ENCODE measurements at regions of chr2 and their contacts with region 1.

Region 1: GRCh38 chr2:207529330-207530159 is at the start of gene CREB1:
- DNase-seq: peak; percentile 100
- H3K4me3 Mint-ChIP-seq: peak within 1 kb of the TSS; percentile 98
- H3K27ac Mint-ChIP-seq: peak within 1 kb of the TSS; percentile 100
- H3K4me1 Mint-ChIP-seq: peaks cover 59% of the 10 kb centered on the region
- H3K27me3 Mint-ChIP-seq: no peaks in the 10 kb centered on the region
- total RNA-seq, gene CREB1: 93.7 to 97.7 TPM

Region 2: GRCh38 chr2:206159346-206160124 is 1370.0 kb before region 1 on chr2 and contains the starts of genes EEF1B2 and NDUFS1:
- CTCF ChIA-PET with region 1: no interaction called
- intact Hi-C with region 1: loop called (anchors 1 kb)
- DNase-seq: peak; percentile 98
- H3K4me3 Mint-ChIP-seq: peak within 1 kb of the TSS; percentile 96
- H3K27ac Mint-ChIP-seq: peak within 1 kb of the TSS; percentile 97
- H3K4me1 Mint-ChIP-seq: peaks cover 50% of the 10 kb centered on the region
- H3K27me3 Mint-ChIP-seq: no peaks in the 10 kb centered on the region
- total RNA-seq, gene EEF1B2: 1,328 to 1,373 TPM
- total RNA-seq, gene NDUFS1: 81.1 to 83.3 TPM

Region 3: DNA sequence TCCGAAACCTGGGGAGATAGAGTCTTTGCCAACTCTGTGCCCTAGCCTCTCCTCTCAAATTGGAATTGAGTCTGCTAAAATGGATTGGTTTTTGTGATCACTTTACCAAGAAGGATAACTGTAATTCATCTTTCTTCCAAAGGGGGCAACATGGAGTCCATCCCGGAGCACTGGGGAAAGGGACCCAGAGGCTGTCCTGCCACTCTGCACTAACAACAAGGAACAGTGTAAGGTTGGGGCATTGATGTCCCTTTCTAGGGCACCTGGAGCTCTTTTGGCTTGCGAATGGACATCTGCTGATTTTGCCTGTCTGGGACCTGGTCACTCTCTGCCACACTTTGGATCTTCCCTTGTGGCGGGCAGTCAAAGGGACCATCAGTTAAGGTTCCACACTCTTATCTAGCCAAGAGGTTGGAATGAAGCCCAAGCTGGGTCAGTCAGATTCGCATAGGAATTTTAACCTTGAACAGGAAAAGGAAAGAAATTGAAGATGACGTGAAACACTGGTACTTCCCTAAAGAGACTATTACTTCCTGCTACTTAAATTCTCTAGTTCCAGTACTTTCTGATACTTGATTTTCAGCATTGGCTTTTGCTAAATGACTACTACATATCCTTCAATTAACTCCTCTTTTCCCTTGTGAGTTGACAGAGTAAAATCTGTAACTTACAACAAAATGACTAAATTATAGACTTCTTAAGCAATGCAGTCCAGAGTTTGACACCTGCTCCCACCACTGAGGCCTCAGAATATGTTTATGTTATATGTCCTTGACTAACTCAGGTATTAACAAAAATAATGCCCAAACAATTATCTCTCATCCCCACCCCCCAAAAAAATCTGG is 299.1 kb before region 1 on chr2:
- CTCF ChIA-PET with region 1: no interaction called
- intact Hi-C with region 1: loop called (anchors 5 kb)
- DNase-seq: no peak
- H3K4me3 Mint-ChIP-seq: no peak overlapping the region
- H3K27ac Mint-ChIP-seq: peak overlapping the region; percentile 86
- H3K4me1 Mint-ChIP-seq: peaks cover 53% of the 10 kb centered on the region
- H3K27me3 Mint-ChIP-seq: no peaks in the 10 kb centered on the region

Region 4: DNA sequence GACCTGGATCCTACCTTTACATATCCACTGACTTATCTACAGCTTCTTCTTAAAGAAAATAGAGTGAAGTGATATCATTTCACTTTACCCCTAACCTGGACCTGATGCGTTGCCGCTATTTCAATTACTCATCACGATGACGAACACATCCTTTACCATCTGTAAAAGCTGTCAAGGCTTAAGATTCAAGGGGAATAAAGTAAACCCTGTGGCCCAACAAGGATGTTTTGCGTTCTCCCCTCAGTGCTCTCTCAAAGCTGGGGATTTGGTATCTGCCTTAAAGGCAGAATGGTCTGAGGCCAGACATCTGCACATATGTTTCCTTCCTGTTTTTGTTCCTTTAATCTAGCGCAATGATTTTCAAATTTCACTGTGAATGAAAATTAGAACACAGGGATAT is 263.7 kb before region 1 on chr2:
- CTCF ChIA-PET with region 1: no interaction called
- intact Hi-C with region 1: no loop called
- DNase-seq: peak; percentile 27
- H3K4me3 Mint-ChIP-seq: no peak overlapping the region
- H3K27ac Mint-ChIP-seq: no peak overlapping the region
- H3K4me1 Mint-ChIP-seq: peaks cover 9% of the 10 kb centered on the region
- H3K27me3 Mint-ChIP-seq: no peaks in the 10 kb centered on the region

Region 5: GRCh38 chr2:207394812-207395534 is 134.6 kb before region 1 on chr2:
- CTCF ChIA-PET with region 1: no interaction called
- intact Hi-C with region 1: no loop called
- DNase-seq: peak; percentile 71
- H3K4me3 Mint-ChIP-seq: no peak overlapping the region
- H3K27ac Mint-ChIP-seq: peak overlapping the region; percentile 7
- H3K4me1 Mint-ChIP-seq: peaks cover 8% of the 10 kb centered on the region
- H3K27me3 Mint-ChIP-seq: no peaks in the 10 kb centered on the region

Region 6: GRCh38 chr2:207484444-207485391 is 44.8 kb before region 1 on chr2:
- CTCF ChIA-PET with region 1: interaction called, 6 read pairs
- intact Hi-C with region 1: loop called (anchors 2 kb)
- DNase-seq: no peak
- H3K4me3 Mint-ChIP-seq: no peak overlapping the region
- H3K27ac Mint-ChIP-seq: no peak overlapping the region
- H3K4me1 Mint-ChIP-seq: peaks cover 27% of the 10 kb centered on the region
- H3K27me3 Mint-ChIP-seq: no peaks in the 10 kb centered on the region

Region 7: GRCh38 chr2:207710814-207711740 is 181.5 kb after region 1 on chr2 and contains the start of gene CCNYL1:
- CTCF ChIA-PET with region 1: no interaction called
- intact Hi-C with region 1: loop called (anchors 1 kb)
- DNase-seq: peak; percentile 98
- H3K4me3 Mint-ChIP-seq: peak within 1 kb of the TSS; percentile 88
- H3K27ac Mint-ChIP-seq: peak within 1 kb of the TSS; percentile 56
- H3K4me1 Mint-ChIP-seq: peaks cover 26% of the 10 kb centered on the region
- H3K27me3 Mint-ChIP-seq: no peaks in the 10 kb centered on the region
- total RNA-seq, gene CCNYL1: 2.5 to 2.7 TPM

Region 8: DNA sequence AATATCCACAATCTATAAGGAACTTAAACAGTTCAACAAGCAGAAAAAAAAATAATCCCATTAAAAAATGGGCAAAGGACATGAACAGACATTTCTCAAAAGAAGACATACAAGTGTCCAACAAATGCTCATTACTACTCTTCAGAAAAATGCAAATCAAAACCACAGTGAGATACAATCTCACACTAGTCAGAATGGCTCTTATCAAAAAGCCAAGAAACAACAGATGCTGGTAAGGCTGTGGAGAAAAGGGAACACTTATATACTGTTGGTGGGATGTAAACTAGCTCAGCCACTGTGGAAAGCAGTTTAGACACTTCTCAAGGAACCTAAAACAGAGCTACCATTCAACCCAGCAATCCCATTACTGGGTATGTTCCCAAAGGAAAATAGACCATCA is 623.6 kb after region 1 on chr2:
- CTCF ChIA-PET with region 1: no interaction called
- intact Hi-C with region 1: no loop called
- DNase-seq: no peak
- H3K4me3 Mint-ChIP-seq: no peak overlapping the region
- H3K27ac Mint-ChIP-seq: no peak overlapping the region
- H3K4me1 Mint-ChIP-seq: no peaks in the 10 kb centered on the region
- H3K27me3 Mint-ChIP-seq: no peaks in the 10 kb centered on the region

Region 9: DNA sequence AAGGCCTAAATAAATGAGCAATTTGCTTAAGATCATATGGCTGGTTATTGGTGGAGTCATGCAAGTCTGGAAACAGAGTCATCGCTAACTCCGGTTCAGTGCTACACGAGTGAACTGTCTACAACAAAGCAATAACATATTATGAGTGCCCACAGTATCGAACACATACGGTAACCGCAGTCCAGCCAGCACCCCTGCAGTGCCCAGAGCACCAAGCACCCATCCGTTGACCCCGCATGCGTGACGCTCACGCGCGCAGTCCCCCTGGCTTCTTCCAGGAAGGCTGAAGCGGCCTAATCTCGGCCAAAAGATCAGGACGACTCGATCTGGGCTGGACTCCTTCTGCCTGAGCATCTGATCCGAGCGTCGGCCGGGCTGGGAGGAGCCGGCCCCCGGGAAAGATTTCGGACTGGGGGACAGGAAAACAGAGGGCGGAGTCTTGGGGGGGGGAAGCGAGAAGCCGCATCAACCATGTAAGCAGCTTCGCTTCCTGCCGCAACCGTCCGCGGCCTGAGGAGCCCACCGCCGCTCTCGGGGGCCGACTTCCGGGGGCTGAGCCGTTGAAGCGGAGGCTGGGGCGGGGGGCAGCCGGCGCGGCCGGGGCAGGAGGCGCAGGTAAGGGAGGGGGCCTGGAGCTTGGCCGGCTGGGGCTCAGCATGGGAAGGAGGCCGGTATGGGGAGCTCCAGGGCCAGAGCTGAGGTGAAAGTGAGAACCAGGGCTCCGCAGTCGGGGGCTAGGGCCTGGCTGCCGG is 736.4 kb after region 1 on chr2 and contains the start of gene PIKFYVE:
- CTCF ChIA-PET with region 1: no interaction called
- intact Hi-C with region 1: loop called (anchors 1 kb)
- DNase-seq: peak; percentile 94
- H3K4me3 Mint-ChIP-seq: peak within 1 kb of the TSS; percentile 95
- H3K27ac Mint-ChIP-seq: peak within 1 kb of the TSS; percentile 94
- H3K4me1 Mint-ChIP-seq: peaks cover 33% of the 10 kb centered on the region
- H3K27me3 Mint-ChIP-seq: no peaks in the 10 kb centered on the region
- total RNA-seq, gene PIKFYVE: 20.2 to 22.4 TPM

Measured in activated naive CD4-positive, alpha-beta T cell treated with anti-CD3 and anti-CD28 coated beads for 36 hours (primary cell).